ENCODE measurements at regions of chr1 and their contacts with region 1.

Region 1: DNA sequence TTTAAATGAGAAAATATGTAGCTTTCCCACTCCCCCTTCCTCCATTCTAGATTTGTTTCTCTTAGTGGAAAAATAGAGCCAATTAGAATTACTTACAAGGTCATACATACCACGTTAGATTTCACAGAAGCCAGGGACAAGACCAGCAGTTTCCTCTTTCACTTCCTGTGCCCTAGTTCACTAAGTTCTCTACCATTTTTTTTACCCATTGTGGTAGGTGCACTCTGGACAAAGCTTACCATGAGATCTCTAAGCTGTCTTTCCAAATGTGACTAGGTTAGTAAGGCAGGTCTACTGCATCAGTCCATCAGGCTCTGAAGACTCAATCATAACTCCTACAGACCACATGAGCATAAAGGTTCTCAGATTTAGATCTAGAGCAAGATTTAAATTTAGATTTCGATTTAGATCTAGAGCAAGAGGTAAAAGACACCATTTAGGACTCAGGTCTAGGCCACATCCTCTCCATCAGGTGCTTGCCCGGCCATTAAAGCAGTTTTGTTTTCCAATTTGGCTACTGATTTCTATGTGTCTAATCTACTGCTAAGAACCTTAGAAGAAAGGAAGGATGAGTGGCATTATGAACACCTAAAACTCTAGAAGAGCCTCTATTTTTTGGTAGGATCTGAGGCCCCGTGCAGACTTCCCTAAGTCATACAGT is 235.3 kb downstream of the FAF1 start:
- DNase-seq: no peak
- H3K4me3 ChIP-seq: no peak overlapping the region
- H3K27ac ChIP-seq: no peak overlapping the region
- H3K4me1 ChIP-seq: peaks cover 0 to 4% (median 0%) of the 10 kb centered on the region in 3 donors
- H3K27me3 ChIP-seq: no peaks in the 10 kb centered on the region
- CTCF ChIP-seq: no peak
- POLR2A ChIP-seq: no peak

Region 2: GRCh38 chr1:50527249-50527986 is 197.3 kb before region 1 on chr1:
- intact Hi-C with region 1: no loop called
- DNase-seq: no peak
- H3K4me3 ChIP-seq: no peak overlapping the region
- H3K27ac ChIP-seq: no peak overlapping the region
- H3K4me1 ChIP-seq: no peaks in the 10 kb centered on the region
- H3K27me3 ChIP-seq: no peaks in the 10 kb centered on the region
- CTCF ChIP-seq: no peak
- POLR2A ChIP-seq: no peak

Region 3: DNA sequence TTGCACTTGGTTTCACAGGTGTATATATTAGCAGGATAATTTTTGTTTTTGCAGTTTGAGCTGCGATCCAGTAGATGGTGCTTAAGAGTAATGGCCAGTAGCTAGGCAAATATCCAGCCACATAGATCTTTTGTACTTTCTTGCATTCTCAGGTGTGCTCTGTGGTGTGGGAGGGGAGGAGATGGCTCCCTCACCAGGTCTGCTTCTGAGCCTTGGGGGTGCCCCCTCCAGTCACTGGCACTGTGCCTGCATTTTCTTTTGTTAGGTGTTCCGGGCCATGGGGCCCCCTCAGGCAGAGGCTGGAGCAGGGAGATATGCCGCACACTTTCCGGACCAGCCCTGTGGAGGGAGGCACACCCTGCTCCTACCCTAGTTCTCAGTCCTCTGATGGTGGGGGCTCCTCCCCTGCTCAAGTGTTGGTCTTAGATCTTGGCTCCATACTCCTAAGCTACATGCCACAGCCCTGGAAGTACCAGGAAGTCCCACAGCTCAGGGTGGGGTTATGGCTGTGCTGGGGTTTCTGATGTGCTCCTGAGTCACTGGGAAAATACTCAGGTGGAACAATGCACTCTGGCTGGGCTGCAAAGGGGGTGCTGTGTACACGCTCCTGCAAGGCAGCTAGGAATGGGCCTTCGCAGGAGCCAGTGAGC is 104.0 kb before region 1 on chr1:
- intact Hi-C with region 1: loop called (anchors 10 kb)
- DNase-seq: no peak
- H3K4me3 ChIP-seq: peak overlapping the region; percentile 6 to 40 (median 14)
- H3K27ac ChIP-seq: peak overlapping the region; percentile 69 to 85 (median 79)
- H3K4me1 ChIP-seq: peaks cover 0 to 17% (median 0%) of the 10 kb centered on the region in 3 donors
- H3K27me3 ChIP-seq: no peaks in the 10 kb centered on the region
- CTCF ChIP-seq: peak in 5 of 6 experiments; percentile 22 to 69 (median 46)
- POLR2A ChIP-seq: no peak

Measured in esophagus squamous epithelium (tissue), 5 donors.